Endothelial cell of umbilical vein (primary cell): ENCODE measurements at regions of chr20 and their contacts with region 1.

Region 1: DNA sequence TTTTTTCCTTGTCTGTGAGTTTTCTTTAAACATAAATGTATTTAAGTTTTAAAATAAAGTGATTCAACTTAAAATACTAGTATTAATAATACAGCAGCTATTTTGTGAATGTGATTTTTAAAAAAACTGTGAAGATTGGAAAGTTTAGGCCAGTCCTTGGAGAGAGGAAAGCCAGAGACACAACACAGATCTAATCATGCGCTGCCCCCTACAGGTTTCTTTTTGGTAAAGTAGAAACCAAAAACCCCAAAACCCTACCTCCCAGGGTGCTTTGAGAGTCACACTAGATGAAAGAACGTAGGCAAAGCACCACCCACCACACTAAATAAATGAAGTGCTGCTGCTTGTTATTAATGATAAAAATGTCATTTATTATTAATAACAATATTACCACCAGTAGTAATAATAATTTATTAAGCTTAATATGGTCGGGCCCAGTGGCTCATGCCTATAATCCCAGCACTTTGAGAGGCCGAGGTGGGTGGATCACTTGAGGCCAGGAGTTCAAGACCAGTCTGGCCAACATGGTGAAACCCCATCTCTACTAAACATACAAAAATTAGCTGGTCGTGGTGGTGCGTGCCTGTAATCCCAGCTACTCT is 33.7 kb downstream of the SLC9A8 start:
- DNase-seq: peak; percentile 48
- H3K4me3 ChIP-seq: no peak overlapping the region
- H3K27ac ChIP-seq: no peak overlapping the region
- H3K4me1 ChIP-seq: no peaks in the 10 kb centered on the region
- H3K27me3 ChIP-seq: no peaks in the 10 kb centered on the region
- CTCF ChIP-seq: peak; percentile 41 to 56
- POLR2A ChIP-seq: no peak

Region 2: DNA sequence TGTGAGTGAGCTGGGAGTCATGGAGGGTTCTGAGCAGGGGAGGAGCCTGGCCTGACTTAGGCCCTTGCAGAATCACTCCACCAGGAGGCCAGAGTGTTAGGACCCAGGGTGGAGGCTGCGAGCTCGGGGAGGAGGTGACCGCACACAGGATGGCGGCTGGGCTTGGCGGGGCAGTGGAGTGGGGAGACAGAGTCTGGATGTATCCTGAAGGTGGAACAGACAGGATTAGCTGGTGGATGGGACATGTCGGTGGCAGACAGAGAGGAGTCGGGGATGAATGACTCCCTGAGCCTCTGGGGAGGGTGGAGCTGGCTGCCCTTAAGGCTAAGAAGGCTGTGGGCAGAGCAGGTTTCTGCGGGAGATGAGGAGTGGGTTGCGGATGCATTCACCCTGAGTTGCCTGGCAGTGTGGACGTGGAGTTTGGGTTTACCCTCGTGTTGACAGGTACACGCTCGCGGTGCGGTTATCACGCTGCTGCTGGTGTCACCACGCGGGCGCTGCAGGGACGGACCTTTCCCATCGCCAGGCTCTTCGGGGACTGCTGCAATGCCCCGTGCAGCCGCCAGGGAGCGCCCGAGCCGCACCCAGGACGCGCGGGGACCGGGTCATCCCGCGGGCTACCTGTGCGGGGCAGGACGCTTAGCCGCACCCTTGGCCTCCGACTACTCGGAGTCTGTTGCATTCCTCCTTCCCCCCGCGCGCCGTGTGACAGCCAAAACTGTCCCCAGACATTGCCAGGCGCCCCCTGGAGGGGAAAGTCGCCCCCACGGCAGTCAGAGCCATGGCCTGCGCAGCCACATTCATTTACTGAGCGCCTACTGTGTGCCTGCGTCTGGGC is 235.4 kb before region 1 on chr20:
- CTCF ChIA-PET with region 1: interaction called, 274 read pairs
- POLR2A ChIA-PET with region 1: no interaction called
- dilution Hi-C with region 1: no loop called
- intact Hi-C with region 1: loop called (anchors 1 kb)
- DNase-seq: peak; percentile 54
- H3K4me3 ChIP-seq: no peak overlapping the region
- H3K27ac ChIP-seq: no peak overlapping the region
- H3K4me1 ChIP-seq: no peaks in the 10 kb centered on the region
- H3K27me3 ChIP-seq: no peaks in the 10 kb centered on the region
- CTCF ChIP-seq: peak; percentile 99
- POLR2A ChIP-seq: no peak

Region 3: GRCh38 chr20:49661560-49662329 is 184.6 kb before region 1 on chr20:
- CTCF ChIA-PET with region 1: interaction called, 16 read pairs
- POLR2A ChIA-PET with region 1: no interaction called
- dilution Hi-C with region 1: loop called (anchors 25 kb)
- intact Hi-C with region 1: no loop called
- DNase-seq: peak; percentile 52
- H3K4me3 ChIP-seq: no peak overlapping the region
- H3K27ac ChIP-seq: no peak overlapping the region
- H3K4me1 ChIP-seq: peaks cover 19% of the 10 kb centered on the region
- H3K27me3 ChIP-seq: no peaks in the 10 kb centered on the region
- CTCF ChIP-seq: no peak
- POLR2A ChIP-seq: no peak

Region 4: GRCh38 chr20:49685809-49686208 is 160.5 kb before region 1 on chr20:
- CTCF ChIA-PET with region 1: interaction called, 12 read pairs
- POLR2A ChIA-PET with region 1: no interaction called
- dilution Hi-C with region 1: no loop called
- intact Hi-C with region 1: no loop called
- DNase-seq: no peak
- H3K4me3 ChIP-seq: no peak overlapping the region
- H3K27ac ChIP-seq: no peak overlapping the region
- H3K4me1 ChIP-seq: peaks cover 14% of the 10 kb centered on the region
- H3K27me3 ChIP-seq: no peaks in the 10 kb centered on the region
- CTCF ChIP-seq: no peak
- POLR2A ChIP-seq: no peak

Region 5: GRCh38 chr20:49713753-49714712 is 132.3 kb before region 1 on chr20 and contains the start of gene B4GALT5:
- CTCF ChIA-PET with region 1: interaction called, 14 read pairs
- POLR2A ChIA-PET with region 1: no interaction called
- dilution Hi-C with region 1: no loop called
- intact Hi-C with region 1: no loop called
- DNase-seq: peak; percentile 78
- H3K4me3 ChIP-seq: peak within 1 kb of the TSS; percentile 81 to 93 (median 87)
- H3K27ac ChIP-seq: peak within 1 kb of the TSS; percentile 79
- H3K4me1 ChIP-seq: peaks cover 23% of the 10 kb centered on the region
- H3K27me3 ChIP-seq: no peaks in the 10 kb centered on the region
- CTCF ChIP-seq: no peak
- POLR2A ChIP-seq: peak; percentile 46
- total RNA-seq, gene B4GALT5: 58.5 and 70.1 TPM in 2 replicates

Region 6: GRCh38 chr20:49835031-49835430 is 11.3 kb before region 1 on chr20:
- CTCF ChIA-PET with region 1: interaction called, 10 read pairs
- POLR2A ChIA-PET with region 1: no interaction called
- dilution Hi-C with region 1: no loop called
- intact Hi-C with region 1: no loop called
- DNase-seq: no peak
- H3K4me3 ChIP-seq: no peak overlapping the region
- H3K27ac ChIP-seq: no peak overlapping the region
- H3K4me1 ChIP-seq: no peaks in the 10 kb centered on the region
- H3K27me3 ChIP-seq: no peaks in the 10 kb centered on the region
- CTCF ChIP-seq: no peak
- POLR2A ChIP-seq: no peak